Mammary epithelial cell (primary cell): ENCODE measurements at regions of chr1 and their contacts with region 1.

Region 1: DNA sequence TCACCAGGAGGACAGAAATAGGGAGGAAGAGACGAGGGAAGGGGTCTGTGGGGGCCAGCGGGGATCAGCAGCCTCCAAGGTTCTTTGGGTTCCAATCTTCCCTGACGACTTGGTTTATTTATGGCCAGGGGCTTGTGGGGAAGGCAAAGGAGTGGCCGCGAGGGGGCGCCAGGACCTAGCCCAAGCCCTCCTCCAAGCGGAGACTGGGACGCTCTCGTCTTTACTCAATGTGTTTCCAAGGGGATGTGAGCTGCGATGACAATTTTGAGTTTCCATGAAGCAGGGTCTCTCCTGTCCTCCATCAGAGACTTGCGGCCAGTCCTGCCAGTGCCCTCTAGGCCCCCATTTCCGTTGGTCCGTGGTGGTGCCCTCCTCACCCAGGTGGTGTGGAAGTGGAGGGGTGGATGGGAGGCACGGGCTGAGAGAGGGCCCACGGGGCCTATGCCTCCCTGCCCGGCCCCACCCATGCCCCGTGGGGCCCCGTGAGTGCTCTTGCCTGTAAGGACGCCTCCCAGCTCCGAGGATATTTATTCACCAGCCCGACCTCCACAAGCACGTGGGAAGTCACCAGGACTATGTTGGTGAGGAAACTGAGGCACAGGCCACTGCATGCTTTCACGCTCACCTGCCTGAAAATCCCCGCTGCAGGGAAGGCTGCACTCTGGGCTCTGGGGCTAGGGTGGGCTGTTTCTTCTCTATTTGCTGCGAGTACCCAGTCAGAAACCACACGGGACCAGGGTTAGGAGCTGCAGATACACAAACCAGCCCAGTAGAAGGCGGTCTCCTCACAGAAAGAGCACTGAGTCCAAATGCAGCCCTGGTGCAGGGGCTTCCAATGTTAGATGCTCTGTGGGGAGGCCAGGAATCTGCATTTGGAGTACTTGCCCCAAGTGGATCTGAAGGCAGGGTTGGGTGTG is 26.5 kb downstream of the DMRTB1 start:
- DNase-seq: peak; percentile 35
- H3K4me3 ChIP-seq: no peak overlapping the region
- H3K27ac ChIP-seq: no peak overlapping the region
- H3K4me1 ChIP-seq: no peaks in the 10 kb centered on the region
- H3K27me3 ChIP-seq: no peaks in the 10 kb centered on the region
- CTCF ChIP-seq: peak; percentile 74 to 95

Region 2: GRCh38 chr1:53367503-53368304 is 118.0 kb before region 1 on chr1:
- CTCF ChIA-PET with region 1: no interaction called
- dilution Hi-C with region 1: no loop called
- in situ Hi-C with region 1: no loop called
- intact Hi-C with region 1: no loop called
- DNase-seq: no peak
- H3K4me3 ChIP-seq: no peak overlapping the region
- H3K27ac ChIP-seq: no peak overlapping the region
- H3K4me1 ChIP-seq: no peaks in the 10 kb centered on the region
- H3K27me3 ChIP-seq: peaks cover 6% of the 10 kb centered on the region
- CTCF ChIP-seq: no peak

Region 3: DNA sequence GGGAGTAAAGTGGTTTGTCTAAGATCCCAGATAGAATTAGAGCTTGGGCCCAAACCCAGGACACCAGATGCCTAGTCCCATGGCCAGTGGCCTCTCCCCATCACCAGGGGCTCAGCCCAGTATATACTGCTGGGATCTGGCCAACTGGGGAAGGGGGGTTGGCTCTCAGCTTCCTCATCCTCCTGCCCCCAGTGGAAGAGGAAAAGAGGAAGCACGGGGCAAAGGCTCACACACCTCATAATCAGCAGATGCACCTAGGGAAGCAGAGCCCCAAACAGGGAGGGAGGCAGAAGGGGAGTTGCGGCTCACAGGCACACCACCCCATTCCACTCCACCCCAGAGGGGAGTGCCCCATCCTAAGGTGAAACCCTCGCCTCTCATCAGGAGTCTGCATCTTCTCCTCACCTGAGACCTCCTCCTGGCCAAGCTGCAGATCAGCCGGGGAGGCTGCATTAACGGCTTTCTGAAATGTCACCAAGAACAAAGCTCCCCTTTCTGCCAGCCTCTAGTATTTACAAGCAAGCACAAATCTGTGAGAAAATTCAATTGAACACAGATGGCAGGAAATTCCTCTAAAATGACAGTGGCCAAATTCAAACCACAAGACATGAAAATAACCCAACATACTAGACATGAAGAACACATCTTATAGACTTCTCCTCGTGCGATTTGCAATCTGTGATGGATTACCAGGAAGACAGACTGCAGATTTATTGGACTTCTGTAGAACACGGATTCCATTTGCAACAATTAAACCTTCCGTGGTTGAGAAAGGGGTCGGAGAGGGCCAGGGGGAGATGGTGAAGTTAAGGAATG is 170.4 kb after region 1 on chr1:
- CTCF ChIA-PET with region 1: no interaction called
- dilution Hi-C with region 1: no loop called
- in situ Hi-C with region 1: loop called in 1 of 2 experiments (anchors 25 kb)
- intact Hi-C with region 1: no loop called
- DNase-seq: peak; percentile 17
- H3K4me3 ChIP-seq: no peak overlapping the region
- H3K27ac ChIP-seq: no peak overlapping the region
- H3K4me1 ChIP-seq: no peaks in the 10 kb centered on the region
- H3K27me3 ChIP-seq: peaks cover 2% of the 10 kb centered on the region
- CTCF ChIP-seq: no peak

Region 4: DNA sequence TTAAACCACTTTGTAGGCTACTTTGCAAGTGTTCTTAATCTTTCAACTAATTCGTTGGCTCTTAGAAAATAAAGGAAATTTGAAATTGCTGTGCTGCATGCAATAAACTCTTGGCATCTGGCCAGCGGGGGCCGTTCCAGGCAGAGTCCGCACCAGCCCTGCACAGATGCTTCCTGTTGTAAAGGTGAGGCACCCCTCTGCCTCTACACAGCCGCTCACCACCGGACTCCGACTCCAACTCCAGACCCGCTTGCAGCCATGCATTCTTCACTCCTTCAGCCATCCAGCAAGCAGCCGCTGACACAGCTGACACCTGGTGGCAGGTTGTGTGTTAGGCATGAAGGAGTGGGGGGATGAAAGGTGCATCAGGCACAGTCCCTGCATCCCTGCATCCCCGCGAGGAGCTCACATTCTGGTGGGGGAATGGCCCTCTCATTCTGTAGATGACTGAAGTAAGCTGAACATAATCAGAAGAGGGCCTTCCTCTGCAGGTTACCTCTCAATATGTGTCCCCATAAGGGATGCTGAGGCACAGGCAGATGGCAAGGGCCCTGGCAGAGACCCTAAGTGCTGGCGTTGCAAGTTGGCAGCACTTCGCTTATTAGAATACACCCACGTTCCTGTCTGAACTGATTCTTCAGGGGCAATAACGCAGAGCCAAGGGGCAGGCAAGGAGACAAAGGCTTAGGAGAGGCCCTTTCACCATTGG is 196.4 kb after region 1 on chr1:
- CTCF ChIA-PET with region 1: no interaction called
- dilution Hi-C with region 1: no loop called
- in situ Hi-C with region 1: loop called in 1 of 2 experiments (anchors 10 kb)
- intact Hi-C with region 1: loop called (anchors 1 kb)
- DNase-seq: peak; percentile 25
- H3K4me3 ChIP-seq: no peak overlapping the region
- H3K27ac ChIP-seq: no peak overlapping the region
- H3K4me1 ChIP-seq: no peaks in the 10 kb centered on the region
- H3K27me3 ChIP-seq: no peaks in the 10 kb centered on the region
- CTCF ChIP-seq: peak; percentile 62 to 83

Region 5: GRCh38 chr1:53697721-53698383 is 212.1 kb after region 1 on chr1:
- CTCF ChIA-PET with region 1: no interaction called
- dilution Hi-C with region 1: loop called (anchors 5 kb)
- in situ Hi-C with region 1: no loop called
- intact Hi-C with region 1: no loop called
- DNase-seq: no peak
- H3K4me3 ChIP-seq: no peak overlapping the region
- H3K27ac ChIP-seq: no peak overlapping the region
- H3K4me1 ChIP-seq: no peaks in the 10 kb centered on the region
- H3K27me3 ChIP-seq: no peaks in the 10 kb centered on the region
- CTCF ChIP-seq: no peak

Region 6: GRCh38 chr1:53754484-53755312 is 269.0 kb after region 1 on chr1:
- CTCF ChIA-PET with region 1: no interaction called
- dilution Hi-C with region 1: no loop called
- in situ Hi-C with region 1: loop called in 1 of 2 experiments (anchors 25 kb)
- intact Hi-C with region 1: loop called (anchors 1 kb)
- DNase-seq: peak; percentile 38
- H3K4me3 ChIP-seq: no peak overlapping the region
- H3K27ac ChIP-seq: no peak overlapping the region
- H3K4me1 ChIP-seq: no peaks in the 10 kb centered on the region
- H3K27me3 ChIP-seq: no peaks in the 10 kb centered on the region
- CTCF ChIP-seq: peak; percentile 66 to 72